Psoas muscle (tissue), 8 donors: ENCODE measurements at regions of chr7 and their contacts with region 1.

Region 1: DNA sequence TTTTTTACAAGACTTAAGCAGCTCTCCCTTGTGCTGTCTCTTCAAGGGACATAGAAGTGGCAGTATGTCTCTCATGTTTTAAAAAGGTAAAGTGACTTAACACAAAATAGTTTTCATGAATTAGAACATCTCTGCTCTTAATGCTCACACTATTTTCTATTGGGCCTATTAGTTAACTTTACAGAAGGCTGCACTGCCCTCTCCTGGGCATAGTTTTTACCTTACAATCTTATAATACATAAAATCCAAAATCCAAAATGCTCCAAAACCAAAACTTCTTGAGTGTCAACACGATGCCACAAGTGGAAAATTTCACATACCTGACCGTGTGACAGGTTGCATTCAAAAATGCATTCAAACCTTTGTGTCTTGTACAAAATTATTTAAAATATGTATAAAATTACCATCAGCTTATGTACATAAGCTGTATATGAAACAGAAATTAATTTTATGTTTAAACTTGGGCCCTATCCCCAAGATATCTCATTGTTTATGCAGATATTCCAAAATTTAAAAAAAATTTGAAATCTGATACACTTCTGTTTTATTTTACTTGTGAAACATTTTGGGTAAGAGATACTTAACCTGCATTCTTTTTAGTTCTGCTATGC is 25.8 kb downstream of the TES start:
- DNase-seq: no peak
- ATAC-seq: peak in 2 of 4 donors; percentile 51 to 56
- H3K4me3 ChIP-seq: no peak overlapping the region
- H3K27ac ChIP-seq: no peak overlapping the region
- H3K4me1 ChIP-seq: peaks cover 6% of the 10 kb centered on the region
- H3K27me3 ChIP-seq: no peaks in the 10 kb centered on the region
- CTCF ChIP-seq: peak; percentile 67

Region 2: GRCh38 chr7:116173051-116174028 is 62.8 kb before region 1 on chr7:
- intact Hi-C with region 1: loop called (anchors 2 kb)
- DNase-seq: no peak
- ATAC-seq: peak in 1 of 4 donors; percentile 57
- H3K4me3 ChIP-seq: no peak overlapping the region
- H3K27ac ChIP-seq: no peak overlapping the region
- H3K4me1 ChIP-seq: no peaks in the 10 kb centered on the region
- H3K27me3 ChIP-seq: no peaks in the 10 kb centered on the region
- CTCF ChIP-seq: peak; percentile 61

Region 3: GRCh38 chr7:116180302-116180701 is 55.8 kb before region 1 on chr7:
- intact Hi-C with region 1: loop called in 1 of 2 experiments (anchors 2 kb)
- DNase-seq: no peak
- ATAC-seq: no peak
- H3K4me3 ChIP-seq: no peak overlapping the region
- H3K27ac ChIP-seq: no peak overlapping the region
- H3K4me1 ChIP-seq: no peaks in the 10 kb centered on the region
- H3K27me3 ChIP-seq: no peaks in the 10 kb centered on the region
- CTCF ChIP-seq: peak; percentile 58

Region 4: GRCh38 chr7:116477627-116478026 is 241.5 kb after region 1 on chr7:
- intact Hi-C with region 1: no loop called
- DNase-seq: no peak
- ATAC-seq: no peak
- H3K4me3 ChIP-seq: no peak overlapping the region
- H3K27ac ChIP-seq: no peak overlapping the region
- H3K4me1 ChIP-seq: no peaks in the 10 kb centered on the region
- H3K27me3 ChIP-seq: no peaks in the 10 kb centered on the region
- CTCF ChIP-seq: no peak